Common myeloid progenitor, CD34-positive (primary cell): ENCODE measurements at regions of chr14 and their contacts with region 1.

Region 1: GRCh38 chr14:21092273-21093011 is 6.0 kb downstream of the ZNF219 start:
- DNase-seq: peak; percentile 82 to 91 (median 85)
- H3K4me3 ChIP-seq: no peak overlapping the region
- H3K27ac ChIP-seq: no peak overlapping the region
- H3K4me1 ChIP-seq: peaks cover 0 to 24% (median 10%) of the 10 kb centered on the region in 4 experiments
- H3K27me3 ChIP-seq: no peaks in the 10 kb centered on the region

Region 2: DNA sequence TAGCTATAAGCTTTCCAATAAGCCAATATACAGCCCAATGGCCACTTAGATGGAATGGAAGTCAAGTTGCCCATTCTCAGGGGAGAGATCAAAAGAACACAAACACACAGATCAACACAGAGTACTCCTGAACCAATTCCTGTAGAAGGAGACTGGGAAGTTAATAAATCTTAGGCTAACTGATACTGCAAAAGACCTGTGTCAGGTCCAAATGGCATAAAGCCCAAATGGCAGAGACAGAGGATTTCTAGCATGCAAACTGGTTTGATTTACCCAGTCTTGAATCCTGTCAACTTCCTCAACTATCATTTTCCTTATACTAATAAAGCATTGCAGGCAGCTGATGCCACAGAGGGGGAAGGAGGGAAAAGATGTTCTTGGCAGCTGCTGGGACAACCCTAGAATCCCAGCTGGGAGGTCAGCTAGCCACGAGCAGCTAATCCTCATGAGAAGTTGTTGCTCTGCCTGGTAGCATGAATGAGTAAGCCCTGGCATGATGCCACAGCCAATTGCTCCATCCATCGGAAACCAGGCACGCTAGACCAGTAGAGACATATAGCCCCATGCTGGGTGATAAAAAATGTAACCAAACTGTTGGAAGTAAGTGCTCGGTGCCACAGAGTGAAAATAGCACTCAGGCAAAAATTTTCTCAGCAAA is 377.7 kb before region 1 on chr14:
- CTCF ChIA-PET with region 1: no interaction called
- POLR2A ChIA-PET with region 1: no interaction called
- DNase-seq: peak in 2 of 3 donors; percentile 17 to 19
- H3K4me3 ChIP-seq: peak overlapping the region in 1 of 7 experiments; percentile 23
- H3K27ac ChIP-seq: no peak overlapping the region
- H3K4me1 ChIP-seq: peaks cover 0 to 4% (median 0%) of the 10 kb centered on the region in 4 experiments
- H3K27me3 ChIP-seq: peaks cover 0 to 2% (median 0%) of the 10 kb centered on the region in 5 experiments

Region 3: DNA sequence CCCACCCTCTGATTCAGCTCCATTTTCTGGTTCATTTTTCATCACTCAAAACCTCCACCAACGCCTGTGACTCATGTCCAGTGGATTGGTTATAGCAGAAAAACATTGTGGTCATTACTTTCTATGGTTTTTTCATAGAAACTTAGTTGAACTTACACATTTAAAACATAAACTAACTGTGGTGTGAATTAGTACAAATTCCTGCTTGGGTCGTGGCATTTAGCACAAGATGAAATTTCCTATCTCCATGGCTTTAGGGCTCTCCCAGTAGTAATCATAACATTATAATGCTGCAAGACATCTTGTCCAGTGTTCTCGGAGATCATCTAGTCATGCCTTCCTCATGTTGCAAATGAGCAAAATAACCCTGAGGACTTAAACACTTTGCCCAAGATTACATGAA is 43.2 kb before region 1 on chr14:
- CTCF ChIA-PET with region 1: interaction called, 15 read pairs
- POLR2A ChIA-PET with region 1: no interaction called
- DNase-seq: no peak
- H3K4me3 ChIP-seq: no peak overlapping the region
- H3K27ac ChIP-seq: no peak overlapping the region
- H3K4me1 ChIP-seq: peaks cover 5 to 13% (median 11%) of the 10 kb centered on the region in 4 experiments
- H3K27me3 ChIP-seq: no peaks in the 10 kb centered on the region

Region 4: DNA sequence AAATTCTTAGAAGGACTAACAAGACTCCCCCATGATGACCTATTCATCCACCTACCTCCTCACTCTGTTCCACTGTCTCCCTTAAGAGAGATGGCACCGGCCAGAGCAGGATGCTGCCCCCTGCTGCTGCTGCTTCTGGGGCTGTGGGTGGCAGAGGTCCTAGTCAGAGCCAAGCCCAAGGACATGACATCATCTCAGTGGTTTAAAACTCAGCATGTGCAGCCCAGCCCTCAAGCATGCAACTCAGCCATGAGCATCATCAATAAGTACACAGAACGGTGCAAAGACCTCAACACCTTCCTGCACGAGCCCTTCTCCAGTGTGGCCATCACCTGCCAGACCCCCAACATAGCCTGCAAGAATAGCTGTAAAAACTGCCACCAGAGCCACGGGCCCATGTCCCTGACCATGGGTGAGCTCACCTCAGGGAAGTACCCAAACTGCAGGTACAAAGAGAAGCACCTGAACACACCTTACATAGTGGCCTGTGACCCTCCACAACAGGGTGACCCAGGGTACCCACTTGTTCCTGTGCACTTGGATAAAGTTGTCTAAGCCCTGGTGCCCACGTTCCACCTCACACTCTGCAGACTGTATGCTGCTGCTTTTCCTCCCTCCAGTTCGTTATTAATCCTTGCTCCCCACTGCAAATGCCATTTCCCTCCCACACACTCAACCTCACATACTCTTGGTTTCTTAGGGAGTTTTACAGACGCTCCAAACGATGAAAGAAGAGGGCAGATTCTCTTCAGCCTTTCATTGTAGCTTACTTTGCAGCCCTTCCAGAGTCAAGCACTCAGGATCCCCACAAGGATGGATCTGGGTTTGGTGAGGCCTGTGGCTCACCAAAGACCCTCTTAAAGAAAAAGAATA is 34.4 kb before region 1 on chr14 and contains the start of gene RNASE8:
- CTCF ChIA-PET with region 1: interaction called, 15 read pairs
- POLR2A ChIA-PET with region 1: no interaction called
- DNase-seq: peak in 1 of 3 donors; percentile 52
- H3K4me3 ChIP-seq: no peak within 1 kb of the TSS
- H3K27ac ChIP-seq: no peak within 1 kb of the TSS
- H3K4me1 ChIP-seq: no peaks in the 10 kb centered on the region
- H3K27me3 ChIP-seq: peaks cover 0 to 4% (median 0%) of the 10 kb centered on the region in 5 experiments

Region 5: GRCh38 chr14:21071225-21072030 is 21.0 kb before region 1 on chr14:
- CTCF ChIA-PET with region 1: interaction called, 160 read pairs
- POLR2A ChIA-PET with region 1: interaction called, 10 read pairs
- DNase-seq: peak; percentile 86 to 94 (median 91)
- H3K4me3 ChIP-seq: peak overlapping the region; percentile 34 to 88 (median 73)
- H3K27ac ChIP-seq: peak overlapping the region; percentile 25 to 73
- H3K4me1 ChIP-seq: peaks cover 8 to 45% (median 42%) of the 10 kb centered on the region in 4 experiments
- H3K27me3 ChIP-seq: peaks cover 0 to 15% (median 6%) of the 10 kb centered on the region in 5 experiments

Region 6: GRCh38 chr14:21078287-21078686 is 14.2 kb before region 1 on chr14:
- CTCF ChIA-PET with region 1: interaction called, 135 read pairs
- POLR2A ChIA-PET with region 1: no interaction called
- DNase-seq: no peak
- H3K4me3 ChIP-seq: no peak overlapping the region
- H3K27ac ChIP-seq: no peak overlapping the region
- H3K4me1 ChIP-seq: peaks cover 0 to under 1% (median 0%) of the 10 kb centered on the region in 4 experiments
- H3K27me3 ChIP-seq: no peaks in the 10 kb centered on the region

Region 7: DNA sequence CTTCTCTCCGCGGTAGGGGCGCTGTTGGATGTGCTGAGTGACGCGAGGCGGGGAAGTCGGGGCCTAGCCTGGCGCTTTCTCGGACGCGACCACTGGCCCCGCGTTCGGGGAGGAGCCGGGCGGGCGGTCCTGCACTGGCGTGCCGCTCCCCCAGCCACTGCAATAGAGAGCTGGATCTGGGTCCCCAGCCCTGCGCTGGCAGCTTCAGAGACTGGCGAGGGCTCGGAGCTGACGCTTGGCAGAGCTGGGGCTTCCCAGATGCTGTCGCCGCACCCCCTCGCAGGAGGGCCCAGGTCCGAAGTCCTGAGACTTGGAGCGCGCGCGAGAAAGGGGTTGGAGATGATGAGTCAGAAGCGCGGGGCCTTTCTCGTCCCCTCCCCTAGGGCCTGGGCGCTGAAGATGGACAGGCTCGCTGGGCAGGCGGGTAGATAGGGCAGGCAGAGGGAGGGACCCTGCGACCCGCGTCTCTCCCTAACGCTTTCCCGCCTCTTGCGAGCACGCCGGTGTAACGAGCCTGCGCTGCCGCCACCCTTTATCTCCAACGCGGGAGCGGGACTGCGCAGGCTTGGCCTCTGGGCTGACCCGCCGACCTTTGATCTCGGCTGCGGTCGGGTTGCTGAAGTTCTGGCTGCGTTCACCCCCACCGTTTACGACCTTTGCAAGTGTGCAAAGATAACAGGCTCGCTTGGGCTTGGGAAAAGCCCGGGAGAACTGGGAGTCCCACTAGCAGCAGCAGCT is 11.4 kb after region 1 on chr14:
- CTCF ChIA-PET with region 1: interaction called, 204 read pairs
- POLR2A ChIA-PET with region 1: interaction called, 5 read pairs
- DNase-seq: peak; percentile 94 to 97 (median 96)
- H3K4me3 ChIP-seq: peak overlapping the region; percentile 79 to 89 (median 85)
- H3K27ac ChIP-seq: peak overlapping the region; percentile 98 to 99
- H3K4me1 ChIP-seq: peaks cover 10 to 53% (median 39%) of the 10 kb centered on the region in 4 experiments
- H3K27me3 ChIP-seq: peaks cover 0 to 2% (median 0%) of the 10 kb centered on the region in 5 experiments